GM10248 (cell line): ENCODE measurements at regions of chr15 and their contacts with region 1.

Region 1: GRCh38 chr15:22224241-22224671 is 143.9 kb downstream of the OR4M2 start:
- DNase-seq: no peak
- CTCF ChIP-seq: peak; percentile 7

Region 2: DNA sequence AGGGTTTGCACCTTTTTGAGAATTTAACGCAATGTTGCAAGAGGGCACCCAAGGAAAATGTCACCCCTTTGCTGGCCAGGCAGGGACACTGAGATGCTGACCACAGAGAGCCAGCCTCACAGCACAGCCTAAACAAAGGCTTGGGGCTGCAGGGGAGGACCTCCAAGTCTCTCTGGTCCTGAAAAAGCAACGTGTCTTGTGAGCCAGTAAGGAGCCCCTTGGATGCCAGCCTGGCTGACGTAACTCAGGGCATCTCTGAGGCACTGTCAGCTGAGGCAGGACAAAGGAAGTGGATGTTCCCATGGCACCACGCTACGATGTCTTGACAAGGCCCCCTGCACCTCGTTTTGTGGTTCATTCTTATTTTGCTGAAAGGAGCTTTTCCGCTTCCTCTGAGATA is 16.7 kb after region 1 on chr15:
- CTCF ChIA-PET with region 1: interaction called, 30 read pairs
- POLR2A ChIA-PET with region 1: no interaction called
- DNase-seq: no peak
- CTCF ChIP-seq: no peak

Region 3: GRCh38 chr15:22253676-22254408 is 29.6 kb after region 1 on chr15:
- CTCF ChIA-PET with region 1: interaction called, 13 read pairs
- POLR2A ChIA-PET with region 1: no interaction called
- DNase-seq: peak; percentile 69
- CTCF ChIP-seq: no peak

Region 4: GRCh38 chr15:22262613-22263020 is 38.4 kb after region 1 on chr15:
- CTCF ChIA-PET with region 1: interaction called, 28 read pairs
- POLR2A ChIA-PET with region 1: no interaction called
- DNase-seq: no peak
- CTCF ChIP-seq: no peak